ENCODE measurements at regions of chr7 and their contacts with region 1.

Region 1: DNA sequence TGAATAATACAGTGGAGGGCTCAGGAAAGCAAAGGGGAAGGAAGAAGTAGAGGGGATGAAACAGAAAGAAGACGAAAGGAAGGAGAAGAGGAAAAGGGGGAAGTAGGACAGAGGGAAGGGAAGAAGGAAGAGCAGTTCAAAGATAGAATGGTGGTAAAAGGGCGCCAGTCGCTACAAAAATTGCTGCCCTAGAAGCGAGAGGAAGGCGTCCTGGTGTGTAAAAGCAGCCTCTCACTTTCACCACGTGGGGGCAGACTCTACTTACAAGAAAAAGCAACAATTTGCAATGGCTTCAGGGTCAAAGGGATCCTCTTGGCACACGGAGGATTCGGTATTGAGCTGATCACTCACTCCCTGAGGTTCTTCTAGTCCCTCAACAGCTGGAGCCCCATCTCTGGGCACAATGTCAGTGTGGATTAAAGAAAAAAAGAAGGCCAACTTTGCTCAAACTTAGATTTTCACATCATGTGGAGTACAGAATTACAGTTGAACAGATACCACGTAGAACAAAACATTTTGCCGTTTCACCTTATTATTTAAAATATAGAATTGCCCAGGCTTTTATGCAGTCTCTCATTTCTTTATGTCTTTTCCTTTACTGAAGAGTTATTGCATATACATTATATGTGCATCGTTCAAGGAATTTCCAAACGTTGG is 31.4 kb upstream of the NPVF start:
- DNase-seq: peak; percentile 38 to 74 (median 59)
- H3K4me3 ChIP-seq: no peak overlapping the region
- H3K4me3 Mint-ChIP-seq: peak overlapping the region in 1 of 2 donors; percentile 63
- H3K27ac ChIP-seq: no peak overlapping the region
- H3K27ac Mint-ChIP-seq: no peak overlapping the region
- H3K4me1 ChIP-seq: peaks cover 17 to 24% of the 10 kb centered on the region in 2 donors
- H3K4me1 Mint-ChIP-seq: peaks cover 30% of the 10 kb centered on the region
- H3K27me3 ChIP-seq: peaks cover 0 to 5% of the 10 kb centered on the region in 2 donors
- H3K27me3 Mint-ChIP-seq: peaks cover 8 to 29% (median 13%) of the 10 kb centered on the region in 3 donors
- CTCF ChIP-seq: peak; percentile 83

Region 2: GRCh38 chr7:25369786-25370185 is 110.1 kb after region 1 on chr7:
- intact Hi-C with region 1: no loop called
- DNase-seq: no peak
- H3K4me3 ChIP-seq: no peak overlapping the region
- H3K4me3 Mint-ChIP-seq: no peak overlapping the region
- H3K27ac ChIP-seq: no peak overlapping the region
- H3K27ac Mint-ChIP-seq: no peak overlapping the region
- H3K4me1 ChIP-seq: no peaks in the 10 kb centered on the region
- H3K4me1 Mint-ChIP-seq: no peaks in the 10 kb centered on the region
- H3K27me3 ChIP-seq: no peaks in the 10 kb centered on the region
- H3K27me3 Mint-ChIP-seq: peaks cover 0 to 7% (median 3%) of the 10 kb centered on the region in 3 donors
- CTCF ChIP-seq: no peak

Region 3: DNA sequence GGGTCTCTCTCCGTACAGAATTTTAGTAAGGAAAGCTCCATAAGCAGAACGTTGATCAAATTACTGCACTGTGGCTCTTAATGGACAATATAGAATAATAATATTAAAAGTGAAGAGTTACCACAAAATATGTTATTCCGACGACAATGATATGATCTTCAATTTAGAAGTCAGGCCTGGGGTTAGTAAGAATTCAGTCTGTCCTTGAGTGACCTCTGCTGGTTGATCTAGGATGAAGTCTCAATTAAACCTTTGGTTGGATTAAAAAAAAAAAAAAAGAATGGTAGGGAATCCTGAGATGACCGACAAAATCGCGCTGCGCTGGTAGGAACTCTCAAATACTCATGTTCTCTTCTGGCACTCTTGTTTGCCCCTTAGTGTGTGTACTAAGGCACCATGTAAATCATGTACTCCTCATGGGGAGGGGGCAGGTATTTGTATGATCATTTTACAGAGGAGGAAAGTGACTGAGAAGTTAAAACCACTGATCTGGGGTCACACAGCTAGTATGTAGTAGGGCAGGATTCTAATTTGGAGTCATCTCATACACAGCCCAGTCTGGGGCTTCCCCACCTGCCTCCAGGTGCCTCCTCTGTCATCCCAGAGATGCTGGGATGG is 129.9 kb after region 1 on chr7:
- intact Hi-C with region 1: loop called in 1 of 2 experiments (anchors 5 kb)
- DNase-seq: peak in 1 of 3 donors; percentile 5
- H3K4me3 ChIP-seq: no peak overlapping the region
- H3K4me3 Mint-ChIP-seq: no peak overlapping the region
- H3K27ac ChIP-seq: no peak overlapping the region
- H3K27ac Mint-ChIP-seq: no peak overlapping the region
- H3K4me1 ChIP-seq: no peaks in the 10 kb centered on the region
- H3K4me1 Mint-ChIP-seq: no peaks in the 10 kb centered on the region
- H3K27me3 ChIP-seq: peaks cover 3 to 5% of the 10 kb centered on the region in 2 donors
- H3K27me3 Mint-ChIP-seq: peaks cover 4 to 10% (median 8%) of the 10 kb centered on the region in 3 donors
- CTCF ChIP-seq: peak; percentile 20

Region 4: DNA sequence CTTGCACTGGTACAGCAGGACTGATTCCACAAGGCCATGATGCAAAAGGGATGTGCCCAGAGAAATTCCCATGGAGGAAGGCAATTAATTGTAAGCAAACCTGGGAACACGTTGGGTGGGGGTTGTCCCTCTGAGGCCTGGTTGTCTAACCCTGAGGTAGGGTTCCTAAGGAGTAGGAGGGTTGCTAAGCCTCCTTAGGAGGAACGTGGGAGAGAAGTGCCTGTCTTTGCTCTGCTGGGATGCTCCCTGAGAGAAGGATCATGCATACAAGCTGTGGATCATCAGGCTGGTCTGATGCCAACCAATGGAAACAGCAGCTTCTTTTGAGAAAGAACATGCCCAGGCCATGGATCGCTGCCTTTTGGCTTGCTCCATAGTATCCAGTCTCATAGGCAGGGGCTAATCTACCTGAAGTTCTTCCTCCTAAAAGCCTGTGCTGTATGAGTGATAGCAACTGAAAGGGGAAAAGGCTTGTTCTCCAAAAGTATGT is 172.3 kb after region 1 on chr7:
- intact Hi-C with region 1: no loop called
- DNase-seq: no peak
- H3K4me3 ChIP-seq: no peak overlapping the region
- H3K4me3 Mint-ChIP-seq: no peak overlapping the region
- H3K27ac ChIP-seq: no peak overlapping the region
- H3K27ac Mint-ChIP-seq: peak overlapping the region in 1 of 7 donors; percentile 74
- H3K4me1 ChIP-seq: no peaks in the 10 kb centered on the region
- H3K4me1 Mint-ChIP-seq: peaks cover 6% of the 10 kb centered on the region
- H3K27me3 ChIP-seq: no peaks in the 10 kb centered on the region
- H3K27me3 Mint-ChIP-seq: peaks cover 0 to 3% (median 0%) of the 10 kb centered on the region in 3 donors
- CTCF ChIP-seq: no peak

Region 5: GRCh38 chr7:25469669-25470068 is 210.0 kb after region 1 on chr7:
- intact Hi-C with region 1: no loop called
- DNase-seq: no peak
- H3K4me3 ChIP-seq: no peak overlapping the region
- H3K4me3 Mint-ChIP-seq: no peak overlapping the region
- H3K27ac ChIP-seq: no peak overlapping the region
- H3K27ac Mint-ChIP-seq: no peak overlapping the region
- H3K4me1 ChIP-seq: no peaks in the 10 kb centered on the region
- H3K4me1 Mint-ChIP-seq: no peaks in the 10 kb centered on the region
- H3K27me3 ChIP-seq: no peaks in the 10 kb centered on the region
- H3K27me3 Mint-ChIP-seq: peaks cover 1 to 7% (median 3%) of the 10 kb centered on the region in 3 donors
- CTCF ChIP-seq: no peak

Region 6: GRCh38 chr7:25559581-25560367 is 300.1 kb after region 1 on chr7:
- intact Hi-C with region 1: loop called in 1 of 2 experiments (anchors 5 kb)
- DNase-seq: no peak
- H3K4me3 ChIP-seq: no peak overlapping the region
- H3K4me3 Mint-ChIP-seq: no peak overlapping the region
- H3K27ac ChIP-seq: no peak overlapping the region
- H3K27ac Mint-ChIP-seq: no peak overlapping the region
- H3K4me1 ChIP-seq: no peaks in the 10 kb centered on the region
- H3K4me1 Mint-ChIP-seq: no peaks in the 10 kb centered on the region
- H3K27me3 ChIP-seq: no peaks in the 10 kb centered on the region
- H3K27me3 Mint-ChIP-seq: peaks cover 0 to 3% (median 0%) of the 10 kb centered on the region in 3 donors
- CTCF ChIP-seq: no peak

Region 7: DNA sequence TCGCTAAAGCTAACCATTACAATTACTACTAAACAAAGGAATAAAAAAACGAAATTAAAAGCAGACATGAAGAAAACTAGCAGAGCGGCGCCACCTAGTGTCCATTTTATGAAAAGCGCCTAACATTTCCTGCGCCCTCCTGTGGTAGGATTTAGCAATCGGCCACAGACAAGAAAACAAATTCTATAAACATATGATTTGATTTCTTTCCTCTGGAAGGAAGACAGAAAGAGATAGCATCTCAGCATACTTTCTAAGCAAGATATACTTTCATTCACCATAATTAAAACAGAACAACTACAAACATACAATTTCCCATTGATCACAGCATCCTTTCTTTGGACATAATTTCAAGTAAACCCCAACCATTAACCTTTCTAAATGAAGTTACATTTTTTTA is 306.2 kb after region 1 on chr7:
- intact Hi-C with region 1: loop called (anchors 2 to 5 kb)
- DNase-seq: peak; percentile 50 to 71 (median 69)
- H3K4me3 ChIP-seq: no peak overlapping the region
- H3K4me3 Mint-ChIP-seq: no peak overlapping the region
- H3K27ac ChIP-seq: no peak overlapping the region
- H3K27ac Mint-ChIP-seq: no peak overlapping the region
- H3K4me1 ChIP-seq: no peaks in the 10 kb centered on the region
- H3K4me1 Mint-ChIP-seq: peaks cover 2% of the 10 kb centered on the region
- H3K27me3 ChIP-seq: no peaks in the 10 kb centered on the region
- H3K27me3 Mint-ChIP-seq: peaks cover 0 to 7% (median 2%) of the 10 kb centered on the region in 3 donors
- CTCF ChIP-seq: peak; percentile 100

Region 8: DNA sequence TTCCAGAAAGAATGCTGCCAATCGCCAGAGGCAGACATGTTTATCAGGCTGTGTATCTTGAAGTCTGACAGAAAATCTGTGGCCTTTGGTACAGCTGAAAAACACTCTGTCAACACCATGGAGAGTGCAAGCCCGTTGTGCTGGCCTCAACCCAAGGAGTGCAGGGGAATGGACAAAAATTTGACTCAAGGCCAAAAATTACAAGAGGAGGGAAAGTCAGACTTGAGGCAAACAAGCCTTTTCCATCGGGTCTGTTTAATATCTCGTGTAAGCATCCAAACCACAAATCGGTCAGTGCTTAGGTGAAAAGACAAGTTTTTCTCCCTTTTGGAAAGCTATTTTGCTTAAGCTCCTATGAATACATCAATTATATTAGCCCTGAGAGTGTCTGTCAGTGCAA is 587.0 kb after region 1 on chr7:
- intact Hi-C with region 1: loop called in 1 of 2 experiments (anchors 10 kb)
- DNase-seq: no peak
- H3K4me3 ChIP-seq: no peak overlapping the region
- H3K4me3 Mint-ChIP-seq: no peak overlapping the region
- H3K27ac ChIP-seq: no peak overlapping the region
- H3K27ac Mint-ChIP-seq: no peak overlapping the region
- H3K4me1 ChIP-seq: peaks cover 2% of the 10 kb centered on the region in 2 donors
- H3K4me1 Mint-ChIP-seq: peaks cover 3% of the 10 kb centered on the region
- H3K27me3 ChIP-seq: peaks cover 35 to 64% of the 10 kb centered on the region in 2 donors
- H3K27me3 Mint-ChIP-seq: peaks cover 39 to 60% (median 51%) of the 10 kb centered on the region in 3 donors
- CTCF ChIP-seq: no peak